Endothelial cell of umbilical vein (primary cell): ENCODE measurements at regions of chr5 and their contacts with region 1.

Region 1: DNA sequence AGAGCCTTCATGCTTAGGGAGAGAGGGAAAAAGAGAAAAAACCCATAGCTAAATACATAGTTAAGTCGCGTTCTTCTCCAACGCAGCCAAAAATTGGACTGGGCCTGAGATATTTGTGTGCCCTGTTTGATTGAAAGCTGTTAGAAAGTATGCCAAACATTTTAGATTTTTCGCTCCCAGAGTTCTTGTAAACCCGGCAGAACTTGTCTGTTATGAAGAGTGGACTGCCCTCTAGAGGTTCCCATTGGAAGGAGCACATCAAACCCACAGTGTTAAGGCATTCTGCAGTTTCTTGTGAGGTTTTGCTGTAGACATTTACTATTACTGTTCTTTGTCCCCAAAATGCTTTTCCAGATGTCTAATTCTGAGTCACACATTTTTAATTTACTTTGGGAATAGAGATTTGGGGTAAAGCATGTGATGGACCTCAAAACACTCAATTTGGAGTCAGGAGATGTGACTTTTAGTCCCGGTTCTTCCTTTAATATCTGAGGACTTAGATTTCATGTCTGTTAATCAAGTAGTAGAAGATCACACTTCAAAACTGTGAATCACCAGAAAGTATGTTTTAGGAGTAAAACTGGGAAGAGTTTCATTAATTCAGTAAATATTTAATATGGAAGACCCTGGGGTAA is 96.6 kb downstream of the PCSK1 start:
- DNase-seq: peak; percentile 92
- H3K4me3 ChIP-seq: no peak overlapping the region
- H3K27ac ChIP-seq: peak overlapping the region; percentile 32
- H3K4me1 ChIP-seq: peaks cover 7% of the 10 kb centered on the region
- H3K27me3 ChIP-seq: no peaks in the 10 kb centered on the region
- CTCF ChIP-seq: peak; percentile 84 to 88
- POLR2A ChIP-seq: no peak

Region 2: GRCh38 chr5:95646554-95647431 is 689.7 kb before region 1 on chr5 and contains the start of gene RFESD:
- CTCF ChIA-PET with region 1: no interaction called
- POLR2A ChIA-PET with region 1: no interaction called
- dilution Hi-C with region 1: no loop called
- intact Hi-C with region 1: loop called (anchors 5 kb)
- DNase-seq: peak; percentile 89
- H3K4me3 ChIP-seq: peak within 1 kb of the TSS; percentile 61 to 75 (median 67)
- H3K27ac ChIP-seq: peak within 1 kb of the TSS; percentile 91
- H3K4me1 ChIP-seq: peaks cover 9% of the 10 kb centered on the region
- H3K27me3 ChIP-seq: no peaks in the 10 kb centered on the region
- CTCF ChIP-seq: peak in 1 of 2 donors; percentile 2
- POLR2A ChIP-seq: peak; percentile 86
- total RNA-seq, gene RFESD: 1.1 and 2.0 TPM in 2 replicates

Region 3: GRCh38 chr5:95892780-95893354 is 443.6 kb before region 1 on chr5:
- CTCF ChIA-PET with region 1: interaction called, 90 read pairs
- POLR2A ChIA-PET with region 1: no interaction called
- dilution Hi-C with region 1: no loop called
- intact Hi-C with region 1: loop called (anchors 1 kb)
- DNase-seq: peak; percentile 51
- H3K4me3 ChIP-seq: no peak overlapping the region
- H3K27ac ChIP-seq: no peak overlapping the region
- H3K4me1 ChIP-seq: no peaks in the 10 kb centered on the region
- H3K27me3 ChIP-seq: no peaks in the 10 kb centered on the region
- CTCF ChIP-seq: peak; percentile 31 to 44
- POLR2A ChIP-seq: no peak

Region 4: GRCh38 chr5:96067894-96068614 is 268.4 kb before region 1 on chr5:
- CTCF ChIA-PET with region 1: no interaction called
- POLR2A ChIA-PET with region 1: no interaction called
- dilution Hi-C with region 1: no loop called
- intact Hi-C with region 1: loop called (anchors 5 kb)
- DNase-seq: peak; percentile 72
- H3K4me3 ChIP-seq: no peak overlapping the region
- H3K27ac ChIP-seq: peak overlapping the region; percentile 90
- H3K4me1 ChIP-seq: peaks cover 38% of the 10 kb centered on the region
- H3K27me3 ChIP-seq: no peaks in the 10 kb centered on the region
- CTCF ChIP-seq: no peak
- POLR2A ChIP-seq: peak; percentile 88

Region 5: GRCh38 chr5:96198356-96199058 is 138.0 kb before region 1 on chr5:
- CTCF ChIA-PET with region 1: interaction called, 4 read pairs
- POLR2A ChIA-PET with region 1: no interaction called
- dilution Hi-C with region 1: no loop called
- intact Hi-C with region 1: loop called (anchors 1 kb)
- DNase-seq: peak; percentile 93
- H3K4me3 ChIP-seq: no peak overlapping the region
- H3K27ac ChIP-seq: peak overlapping the region; percentile 40
- H3K4me1 ChIP-seq: peaks cover 16% of the 10 kb centered on the region
- H3K27me3 ChIP-seq: no peaks in the 10 kb centered on the region
- CTCF ChIP-seq: no peak
- POLR2A ChIP-seq: no peak